Esophagus muscularis mucosa (tissue), 4 donors: ENCODE measurements at regions of chr12 and their contacts with region 1.

Region 1: GRCh38 chr12:6904280-6905278 is at the start of gene LRRC23:
- DNase-seq: peak; percentile 99
- H3K4me3 ChIP-seq: peak within 1 kb of the TSS; percentile 58 to 78 (median 66)
- H3K27ac ChIP-seq: peak within 1 kb of the TSS; percentile 75 to 88 (median 82)
- H3K4me1 ChIP-seq: peaks cover 9 to 21% (median 18%) of the 10 kb centered on the region in 4 donors
- H3K27me3 ChIP-seq: no peaks in the 10 kb centered on the region
- CTCF ChIP-seq: peak in 1 of 3 experiments; percentile 35
- EP300 ChIP-seq: no peak
- POLR2A ChIP-seq: no peak
- total RNA-seq, gene LRRC23: 8.3 to 12.9 (median 11.0) TPM

Region 2: GRCh38 chr12:6863586-6864321 is 40.8 kb before region 1 on chr12:
- intact Hi-C with region 1: loop called (anchors 5 kb)
- DNase-seq: no peak
- H3K4me3 ChIP-seq: no peak overlapping the region
- H3K27ac ChIP-seq: no peak overlapping the region
- H3K4me1 ChIP-seq: peaks cover 13 to 17% (median 16%) of the 10 kb centered on the region in 4 donors
- H3K27me3 ChIP-seq: no peaks in the 10 kb centered on the region
- CTCF ChIP-seq: no peak
- EP300 ChIP-seq: no peak
- POLR2A ChIP-seq: no peak

Region 3: GRCh38 chr12:7188562-7189397 is 284.2 kb after region 1 on chr12:
- intact Hi-C with region 1: no loop called
- DNase-seq: peak; percentile 94
- H3K4me3 ChIP-seq: peak overlapping the region; percentile 76 to 97 (median 87)
- H3K27ac ChIP-seq: peak overlapping the region; percentile 89 to 95 (median 90)
- H3K4me1 ChIP-seq: peaks cover 20 to 39% (median 28%) of the 10 kb centered on the region in 4 donors
- H3K27me3 ChIP-seq: no peaks in the 10 kb centered on the region
- CTCF ChIP-seq: peak; percentile 40 to 59 (median 52)
- EP300 ChIP-seq: peak; percentile 23
- POLR2A ChIP-seq: no peak